AG04449 (cell line): ENCODE measurements at regions of chr15 and their contacts with region 1.

Region 1: GRCh38 chr15:68252925-68253534 is 23.5 kb upstream of the CLN6 start:
- DNase-seq: no peak
- H3K4me3 ChIP-seq: no peak overlapping the region
- CTCF ChIP-seq: peak; percentile 69

Region 2: GRCh38 chr15:68042156-68042854 is 210.7 kb before region 1 on chr15:
- CTCF ChIA-PET with region 1: no interaction called
- POLR2A ChIA-PET with region 1: no interaction called
- DNase-seq: no peak
- H3K4me3 ChIP-seq: no peak overlapping the region
- CTCF ChIP-seq: no peak

Region 3: DNA sequence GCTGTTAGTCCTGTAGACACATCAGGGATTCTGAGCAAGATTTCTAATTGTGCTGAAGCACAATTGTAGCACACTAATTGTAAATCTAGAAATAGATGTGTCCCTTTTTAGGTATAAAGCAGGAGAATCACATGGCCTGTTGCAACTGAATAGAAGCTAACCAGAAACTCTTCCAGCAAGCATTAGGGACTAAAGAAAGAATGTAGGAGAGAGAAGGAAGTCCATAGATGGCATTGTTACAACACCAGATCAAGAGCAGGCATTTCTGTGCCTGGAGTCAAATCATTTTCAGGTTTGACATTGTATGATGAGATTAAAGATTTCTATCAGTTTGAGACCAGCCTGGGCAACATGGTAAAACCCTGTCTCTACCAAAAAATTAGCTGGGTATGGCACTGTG is 75.3 kb before region 1 on chr15:
- CTCF ChIA-PET with region 1: no interaction called
- POLR2A ChIA-PET with region 1: no interaction called
- DNase-seq: peak; percentile 61
- H3K4me3 ChIP-seq: no peak overlapping the region
- CTCF ChIP-seq: no peak

Region 4: GRCh38 chr15:68235022-68235421 is 18.0 kb before region 1 on chr15:
- CTCF ChIA-PET with region 1: interaction called, 27 read pairs
- POLR2A ChIA-PET with region 1: interaction called, 3 read pairs
- DNase-seq: no peak
- H3K4me3 ChIP-seq: no peak overlapping the region
- CTCF ChIP-seq: no peak

Region 5: DNA sequence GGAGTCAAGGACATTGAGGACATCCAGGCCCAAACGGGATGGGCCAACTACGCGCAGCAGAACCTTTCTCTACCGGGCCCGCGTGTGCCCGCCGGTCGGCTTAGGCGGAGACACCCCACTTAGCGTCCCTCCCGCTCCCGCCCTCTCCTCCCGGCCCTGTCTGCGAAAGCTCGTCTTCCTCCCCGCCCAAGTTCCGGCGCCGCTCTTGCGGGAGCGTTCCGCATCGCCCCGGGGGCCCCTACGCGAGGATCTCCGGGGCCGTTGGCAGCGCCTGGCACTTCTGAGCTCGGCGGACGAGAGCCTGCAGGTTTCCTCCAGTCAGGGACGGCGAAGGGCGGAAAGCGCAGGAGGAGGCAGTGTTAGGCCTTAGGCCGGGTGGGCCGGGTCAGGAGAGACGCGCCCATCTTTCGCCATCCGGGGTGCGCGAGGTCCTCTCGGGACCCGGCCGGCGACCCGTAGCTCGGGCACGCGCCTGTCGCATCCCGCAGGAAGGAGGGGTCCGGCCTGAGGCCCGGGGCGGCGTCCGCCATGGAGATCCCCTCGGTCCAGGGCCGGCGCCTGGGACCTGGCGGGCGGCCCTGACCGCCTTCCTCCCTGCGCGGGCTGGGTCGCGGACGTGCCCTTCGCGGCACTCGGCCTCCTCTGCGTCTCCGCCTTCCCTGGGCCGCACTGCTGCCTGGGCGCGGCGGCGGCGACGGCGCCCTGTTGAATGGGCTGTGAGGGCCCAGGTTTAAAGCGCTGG is 24.7 kb after region 1 on chr15 and contains the start of gene FEM1B:
- CTCF ChIA-PET with region 1: interaction called, 134 read pairs
- POLR2A ChIA-PET with region 1: interaction called, 6 read pairs
- DNase-seq: peak; percentile 56
- H3K4me3 ChIP-seq: peak within 1 kb of the TSS; percentile 99
- CTCF ChIP-seq: no peak

Region 6: DNA sequence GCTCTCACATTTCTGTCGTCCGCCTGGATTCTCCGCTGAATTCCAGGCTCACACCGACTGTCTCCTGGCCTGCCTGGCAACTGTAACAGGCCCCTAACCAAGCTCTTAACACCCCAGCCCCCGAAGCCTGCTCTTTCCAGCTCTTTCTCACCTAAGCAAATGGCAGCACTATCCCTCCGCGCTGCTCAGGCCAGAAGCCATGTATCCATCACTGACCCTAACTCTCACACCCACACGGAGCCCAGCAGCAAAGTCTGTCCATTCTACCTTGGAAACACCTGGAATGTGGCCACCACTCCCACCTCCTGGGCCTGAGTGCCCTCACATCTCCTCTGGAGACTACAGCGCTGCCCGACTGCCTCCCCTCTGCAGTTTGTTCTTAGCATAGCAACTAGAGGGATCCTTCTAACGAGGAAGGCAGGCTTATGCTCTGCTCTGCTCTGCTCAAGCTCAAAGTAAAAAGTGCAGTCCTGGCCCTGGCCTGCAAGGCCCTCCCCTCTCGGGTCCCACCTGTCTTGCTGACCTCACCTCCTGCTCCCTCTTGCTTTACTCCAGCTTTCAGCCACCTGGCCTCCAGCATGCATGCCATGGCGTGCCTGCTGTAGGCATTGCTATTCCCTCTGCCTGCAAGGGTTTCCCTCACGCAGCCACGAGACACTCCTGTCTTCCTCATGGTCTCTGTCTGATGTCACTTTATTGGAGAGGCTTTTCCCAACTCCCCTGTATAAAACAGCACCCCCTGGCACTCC is 51.7 kb after region 1 on chr15:
- CTCF ChIA-PET with region 1: interaction called, 43 read pairs
- POLR2A ChIA-PET with region 1: interaction called, 4 read pairs
- DNase-seq: no peak
- H3K4me3 ChIP-seq: no peak overlapping the region
- CTCF ChIP-seq: no peak